ENCODE measurements at regions of chr11 and their contacts with region 1.

Region 1: GRCh38 chr11:47466701-47467250 is 17.8 kb upstream of the RAPSN start:
- DNase-seq: no peak
- H3K4me3 ChIP-seq: no peak overlapping the region
- H3K27ac ChIP-seq: peak overlapping the region; percentile 61
- H3K4me1 ChIP-seq: peaks cover 0 to 7% of the 10 kb centered on the region in 2 donors
- H3K27me3 ChIP-seq: no peaks in the 10 kb centered on the region
- CTCF ChIP-seq: no peak

Region 2: GRCh38 chr11:47317064-47317828 is 149.5 kb before region 1 on chr11:
- intact Hi-C with region 1: no loop called
- DNase-seq: peak in 1 of 2 donors; percentile 12
- H3K4me3 ChIP-seq: no peak overlapping the region
- H3K27ac ChIP-seq: no peak overlapping the region
- H3K4me1 ChIP-seq: no peaks in the 10 kb centered on the region
- H3K27me3 ChIP-seq: no peaks in the 10 kb centered on the region
- CTCF ChIP-seq: no peak

Region 3: DNA sequence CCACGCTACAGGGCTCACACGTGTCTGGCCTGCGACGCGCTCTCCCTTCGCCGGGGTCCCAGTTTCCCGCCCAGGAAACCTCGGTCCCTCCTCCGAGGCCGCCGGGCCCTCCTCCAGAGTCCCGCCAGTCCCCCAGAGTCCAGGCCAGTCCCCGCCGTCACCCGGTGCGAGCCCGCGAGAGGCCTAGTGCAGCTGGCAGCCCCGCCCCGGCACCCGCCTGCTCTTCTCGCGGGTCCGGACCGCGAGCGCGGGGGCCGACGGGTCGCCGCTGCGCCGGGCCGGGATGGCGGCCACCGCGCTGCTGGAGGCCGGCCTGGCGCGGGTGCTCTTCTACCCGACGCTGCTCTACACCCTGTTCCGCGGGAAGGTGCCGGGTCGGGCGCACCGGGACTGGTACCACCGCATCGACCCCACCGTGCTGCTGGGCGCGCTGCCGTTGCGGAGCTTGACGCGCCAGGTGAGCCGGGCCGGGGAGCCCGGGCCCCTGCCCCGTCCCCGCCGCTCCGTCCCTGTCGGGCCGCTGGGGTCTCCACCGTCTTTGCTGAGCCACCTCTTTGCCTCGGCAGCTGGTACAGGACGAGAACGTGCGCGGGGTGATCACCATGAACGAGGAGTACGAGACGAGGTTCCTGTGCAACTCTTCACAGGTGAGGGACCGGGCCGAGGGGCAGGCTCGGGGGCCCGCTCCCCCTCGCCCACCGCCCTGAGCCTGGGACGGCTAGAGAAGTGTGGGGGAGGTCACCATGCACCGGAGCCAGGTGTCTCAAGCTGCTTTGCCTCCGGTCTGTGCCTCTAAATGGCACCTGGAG is 98.8 kb after region 1 on chr11 and contains the start of gene PTPMT1:
- intact Hi-C with region 1: loop called (anchors 5 kb)
- DNase-seq: peak in 1 of 2 donors; percentile 85
- H3K4me3 ChIP-seq: peak within 1 kb of the TSS; percentile 76 to 96
- H3K27ac ChIP-seq: peak within 1 kb of the TSS; percentile 76 to 79
- H3K4me1 ChIP-seq: peaks cover 8% of the 10 kb centered on the region in 2 donors
- H3K27me3 ChIP-seq: no peaks in the 10 kb centered on the region
- CTCF ChIP-seq: no peak
- total RNA-seq, gene PTPMT1: 215 TPM